PC-3 (cell line): ENCODE measurements at regions of chr18 and their contacts with region 1.

Region 1: DNA sequence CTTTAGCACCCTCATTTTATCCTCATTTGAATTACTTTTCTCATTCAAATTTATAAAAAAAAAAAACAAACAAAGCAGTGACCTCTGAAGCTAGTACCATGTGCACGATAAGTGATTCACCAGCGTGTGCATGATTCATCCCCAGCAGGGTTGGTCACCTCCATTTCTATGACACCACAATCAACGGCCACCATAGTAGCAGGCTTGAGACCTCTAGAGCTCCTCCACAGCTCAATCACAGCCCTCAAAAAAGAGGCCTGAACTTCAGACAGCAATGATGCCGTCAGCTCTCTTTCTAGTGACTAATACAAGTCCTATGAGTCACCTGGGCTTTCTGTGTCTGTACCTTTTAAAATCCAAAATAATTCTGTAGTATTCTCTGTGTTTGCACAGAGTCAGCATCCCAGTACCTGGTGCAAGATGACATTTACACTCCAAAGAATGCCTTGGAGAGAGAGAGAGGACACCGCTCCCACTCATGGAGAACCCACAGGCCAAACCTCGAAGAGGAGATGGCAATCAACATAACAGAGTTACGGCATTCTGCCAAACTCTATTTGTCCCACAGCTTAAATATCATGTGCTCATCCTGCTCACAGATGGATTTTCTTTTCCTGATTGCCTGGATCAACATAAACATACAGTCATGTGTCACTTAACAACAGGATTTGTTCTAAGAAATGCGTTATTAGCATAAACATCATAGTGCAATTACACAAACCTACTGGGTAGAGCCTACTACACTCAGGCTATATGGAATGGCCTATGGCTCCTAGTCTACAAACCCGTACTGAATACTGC is 58.7 kb downstream of the L3MBTL4 start:
- DNase-seq: peak; percentile 90
- ATAC-seq: peak; percentile 80
- H3K4me3 ChIP-seq: no peak overlapping the region; the same call in 1 of the 2 replicates
- H3K27ac ChIP-seq: peak overlapping the region; percentile 63
- H3K4me1 ChIP-seq: peaks cover 37% of the 10 kb centered on the region
- H3K27me3 ChIP-seq: no peaks in the 10 kb centered on the region
- CTCF ChIP-seq: no peak

Region 2: GRCh38 chr18:6056146-6056932 is 299.6 kb before region 1 on chr18:
- CTCF ChIA-PET with region 1: no interaction called
- POLR2A ChIA-PET with region 1: no interaction called
- intact Hi-C with region 1: loop called (anchors 5 kb)
- DNase-seq: peak; percentile 69
- ATAC-seq: peak; percentile 78
- H3K4me3 ChIP-seq: peak overlapping the region; percentile 36
- H3K27ac ChIP-seq: peak overlapping the region; percentile 97
- H3K4me1 ChIP-seq: peaks cover 47% of the 10 kb centered on the region
- H3K27me3 ChIP-seq: no peaks in the 10 kb centered on the region
- CTCF ChIP-seq: no peak

Region 3: DNA sequence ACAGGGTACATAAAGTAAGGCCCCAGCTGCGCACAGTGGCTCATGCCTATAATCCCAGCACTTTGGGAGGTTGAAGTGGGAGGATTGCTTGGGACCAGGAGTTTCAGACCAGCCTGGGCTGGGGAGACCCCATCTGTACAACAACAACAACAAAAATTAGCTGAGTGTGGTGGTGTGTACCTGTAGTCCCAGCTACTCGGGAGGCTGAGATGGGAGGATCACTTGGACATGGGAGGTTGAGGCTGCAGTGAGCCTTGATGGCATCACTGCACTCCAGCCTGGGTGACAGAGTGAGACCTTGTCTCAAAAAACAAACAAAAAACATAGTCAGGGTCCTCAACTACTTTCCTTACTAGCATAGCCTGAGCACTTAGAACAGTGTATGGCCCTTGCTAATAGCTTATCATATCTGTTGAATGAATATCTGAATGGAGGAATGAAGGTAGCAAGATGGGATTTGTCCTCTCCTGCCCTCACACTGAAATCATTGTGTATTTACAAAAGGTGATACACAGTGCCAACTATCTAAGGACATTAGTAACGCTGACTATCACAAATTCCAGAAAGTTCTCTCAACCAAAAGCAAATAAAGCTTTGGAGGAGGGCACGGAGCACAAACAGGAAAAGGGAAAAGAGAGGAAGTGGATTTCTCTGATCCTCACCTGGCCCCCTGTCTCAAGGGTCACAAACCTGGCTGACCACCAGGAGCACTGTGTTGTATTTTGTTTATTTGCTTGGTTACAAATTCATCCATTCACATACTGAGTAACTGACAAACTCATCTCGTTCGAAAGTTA is 20.6 kb after region 1 on chr18:
- CTCF ChIA-PET with region 1: no interaction called
- POLR2A ChIA-PET with region 1: no interaction called
- intact Hi-C with region 1: loop called (anchors 2 kb)
- DNase-seq: peak; percentile 79
- ATAC-seq: peak; percentile 91
- H3K4me3 ChIP-seq: no peak overlapping the region
- H3K27ac ChIP-seq: no peak overlapping the region
- H3K4me1 ChIP-seq: peaks cover 5% of the 10 kb centered on the region; the same call in 1 of the 2 replicates
- H3K27me3 ChIP-seq: no peaks in the 10 kb centered on the region
- CTCF ChIP-seq: no peak

Region 4: DNA sequence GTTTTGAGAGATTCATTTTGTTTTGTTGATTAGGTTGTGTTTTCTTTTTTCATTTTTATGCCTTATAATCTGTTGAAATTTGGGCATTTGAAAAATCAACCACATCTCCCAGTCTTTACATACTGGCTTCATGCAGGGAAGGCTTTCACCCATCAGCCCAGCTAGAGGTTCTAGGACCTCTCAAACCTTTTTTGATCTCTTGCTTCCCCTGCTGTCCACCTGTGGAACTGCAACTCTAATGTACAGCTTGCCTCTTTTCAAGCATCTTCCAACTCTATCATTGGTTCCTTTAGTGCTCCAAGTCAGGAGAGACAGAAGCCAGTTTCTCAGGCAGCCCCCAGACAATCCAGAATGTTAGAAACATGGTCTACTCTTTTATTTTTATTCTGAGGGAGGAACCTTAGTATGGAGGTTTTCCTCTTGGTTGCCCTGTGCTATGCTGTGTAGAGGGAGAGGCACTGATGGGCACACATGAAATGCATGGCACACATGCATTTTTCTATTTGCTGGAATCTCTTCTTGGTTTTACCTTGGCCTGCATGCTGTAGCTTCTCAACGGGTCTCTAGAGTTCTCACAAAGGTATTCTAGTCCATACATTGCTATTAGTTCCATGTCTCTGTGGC is 165.9 kb after region 1 on chr18:
- CTCF ChIA-PET with region 1: no interaction called
- POLR2A ChIA-PET with region 1: no interaction called
- intact Hi-C with region 1: loop called (anchors 5 kb)
- DNase-seq: peak; percentile 85
- ATAC-seq: peak; percentile 84
- H3K4me3 ChIP-seq: no peak overlapping the region
- H3K27ac ChIP-seq: no peak overlapping the region
- H3K4me1 ChIP-seq: no peaks in the 10 kb centered on the region
- H3K27me3 ChIP-seq: no peaks in the 10 kb centered on the region
- CTCF ChIP-seq: peak; percentile 94

Region 5: GRCh38 chr18:6591491-6591890 is 235.5 kb after region 1 on chr18:
- CTCF ChIA-PET with region 1: no interaction called
- POLR2A ChIA-PET with region 1: no interaction called
- intact Hi-C with region 1: no loop called
- DNase-seq: peak; percentile 65
- ATAC-seq: peak; percentile 81
- H3K4me3 ChIP-seq: no peak overlapping the region
- H3K27ac ChIP-seq: no peak overlapping the region
- H3K4me1 ChIP-seq: peaks cover 9% of the 10 kb centered on the region
- H3K27me3 ChIP-seq: no peaks in the 10 kb centered on the region
- CTCF ChIP-seq: no peak